ENCODE measurements at regions of chr11 and their contacts with region 1.

Region 1: GRCh38 chr11:46808799-46809431 is 37.2 kb downstream of the CKAP5 start:
- DNase-seq: peak in 3 of 9 donors; percentile 6 to 14 (median 12)
- ATAC-seq: peak; percentile 68
- H3K4me3 ChIP-seq: no peak overlapping the region
- H3K4me3 Mint-ChIP-seq: no peak overlapping the region
- H3K27ac ChIP-seq: no peak overlapping the region
- H3K27ac Mint-ChIP-seq: peak overlapping the region in 2 of 9 donors; percentile 65 to 66
- H3K4me1 ChIP-seq: no peaks in the 10 kb centered on the region
- H3K4me1 Mint-ChIP-seq: peaks cover 0 to 15% (median 5%) of the 10 kb centered on the region in 7 donors
- H3K27me3 ChIP-seq: no peaks in the 10 kb centered on the region
- H3K27me3 Mint-ChIP-seq: no peaks in the 10 kb centered on the region

Region 2: GRCh38 chr11:46760429-46761128 is 48.3 kb before region 1 on chr11:
- CTCF ChIA-PET with region 1: no interaction called
- POLR2A ChIA-PET with region 1: no interaction called
- intact Hi-C with region 1: loop called in 1 of 2 experiments (anchors 5 kb)
- DNase-seq: no peak
- ATAC-seq: no peak
- H3K4me3 ChIP-seq: no peak overlapping the region
- H3K4me3 Mint-ChIP-seq: no peak overlapping the region
- H3K27ac ChIP-seq: no peak overlapping the region
- H3K27ac Mint-ChIP-seq: peak overlapping the region in 2 of 9 donors; percentile 13 to 68
- H3K4me1 ChIP-seq: no peaks in the 10 kb centered on the region
- H3K4me1 Mint-ChIP-seq: no peaks in the 10 kb centered on the region
- H3K27me3 ChIP-seq: no peaks in the 10 kb centered on the region
- H3K27me3 Mint-ChIP-seq: no peaks in the 10 kb centered on the region

Measured in naive thymus-derived CD4-positive, alpha-beta T cell (primary cell).